ENCODE measurements at regions of chr19 and their contacts with region 1.

Region 1: DNA sequence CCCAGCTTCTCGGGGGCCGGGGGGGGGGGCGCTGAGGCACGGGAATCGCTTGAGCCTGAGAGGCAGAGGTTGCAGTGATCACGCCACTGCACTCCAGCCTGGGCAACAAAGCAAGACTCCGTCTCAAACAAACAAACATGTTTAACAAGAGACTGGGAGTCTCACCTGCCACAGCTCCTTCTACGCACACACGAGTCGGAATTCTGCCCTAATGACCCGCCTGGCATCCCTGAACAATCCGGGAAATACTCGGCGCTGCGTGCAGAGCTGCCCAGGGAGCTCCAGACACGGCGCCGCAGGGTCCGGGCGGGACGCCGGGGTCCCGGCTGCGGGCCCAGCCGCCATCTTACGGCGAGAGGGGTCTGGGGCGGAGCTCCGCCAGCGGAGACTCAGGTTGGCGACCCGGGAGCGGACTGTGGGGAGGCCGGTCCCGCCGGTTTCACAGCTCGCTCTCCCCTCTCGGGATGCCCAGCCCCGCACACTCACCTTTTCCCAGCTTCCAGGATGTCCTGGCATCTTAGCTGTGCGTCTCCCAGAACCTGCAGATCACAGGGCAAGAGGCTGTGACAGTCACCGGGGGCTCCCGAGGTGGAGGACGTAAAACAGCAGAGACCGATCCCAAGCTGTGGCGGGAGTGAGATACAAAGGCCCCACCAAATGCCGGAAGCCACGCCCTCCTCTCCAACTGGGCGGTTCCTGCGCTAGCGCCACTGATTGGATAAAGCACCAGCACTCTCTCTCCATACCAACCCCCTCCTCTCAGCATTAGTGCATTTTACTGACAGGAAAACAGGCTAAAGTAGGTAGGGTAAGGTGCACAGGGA is 23.6 kb upstream of the ZNF724 start:
- DNase-seq: peak; percentile 86 to 96 (median 94)
- H3K4me3 ChIP-seq: peak overlapping the region; percentile 67 to 100 (median 96)
- H3K27ac ChIP-seq: peak overlapping the region; percentile 26 to 96 (median 89)
- H3K27me3 ChIP-seq: no peaks in the 10 kb centered on the region
- CTCF ChIP-seq: peak in 20 of 56 donors; percentile 2 to 44 (median 14)

Region 2: GRCh38 chr19:23160766-23161165 is 113.0 kb before region 1 on chr19:
- intact Hi-C with region 1: no loop called
- DNase-seq: no peak
- H3K4me3 ChIP-seq: no peak overlapping the region
- H3K27ac ChIP-seq: no peak overlapping the region
- H3K27me3 ChIP-seq: no peaks in the 10 kb centered on the region
- CTCF ChIP-seq: no peak

Region 3: DNA sequence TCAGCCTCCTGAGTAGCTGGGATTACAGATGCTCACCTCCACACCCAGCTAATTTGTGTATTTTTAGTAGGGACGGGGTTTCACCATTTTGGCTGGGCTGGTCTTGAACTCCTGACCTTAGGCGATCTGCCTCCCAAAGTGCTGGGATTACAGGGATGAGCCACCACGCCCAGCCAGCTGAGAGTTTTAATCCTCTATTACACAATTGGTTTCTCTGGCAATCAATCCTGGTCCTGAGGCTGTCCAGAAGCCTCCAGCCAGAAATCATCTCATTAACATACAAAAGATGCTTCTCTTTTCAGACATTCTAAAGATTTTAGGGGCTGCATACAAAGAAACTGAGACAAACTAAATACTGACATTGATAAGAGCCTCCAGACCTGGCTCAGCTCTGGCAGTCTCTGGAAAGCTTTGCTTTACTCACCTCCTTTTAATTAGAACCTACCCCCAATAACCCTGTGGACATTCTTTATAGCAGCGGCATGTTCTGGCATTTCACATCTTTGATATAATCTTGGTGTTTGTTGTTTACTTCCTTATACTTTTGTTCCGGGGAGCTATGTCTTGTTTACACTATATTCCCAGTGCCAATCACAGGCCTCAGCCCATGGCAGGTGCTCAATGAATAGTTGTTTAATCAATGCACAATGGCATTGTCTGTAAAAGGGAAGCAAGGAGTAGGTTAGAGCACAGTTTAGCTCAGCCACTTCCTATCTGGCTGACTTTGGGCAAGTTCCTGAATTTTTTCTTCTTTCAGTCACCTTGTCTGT is 19.5 kb before region 1 on chr19:
- intact Hi-C with region 1: no loop called
- DNase-seq: no peak
- H3K4me3 ChIP-seq: no peak overlapping the region
- H3K27ac ChIP-seq: peak overlapping the region in 17 of 59 donors; percentile 0 to 63 (median 33)
- H3K27me3 ChIP-seq: no peaks in the 10 kb centered on the region
- CTCF ChIP-seq: no peak

Region 4: GRCh38 chr19:23312530-23312929 is 38.7 kb after region 1 on chr19:
- intact Hi-C with region 1: no loop called
- DNase-seq: no peak
- H3K4me3 ChIP-seq: no peak overlapping the region
- H3K27ac ChIP-seq: no peak overlapping the region
- H3K27me3 ChIP-seq: no peaks in the 10 kb centered on the region
- CTCF ChIP-seq: no peak

Region 5: GRCh38 chr19:23395041-23395721 is 121.4 kb after region 1 on chr19 and contains the start of gene ZNF91:
- intact Hi-C with region 1: loop called in 1 of 2 experiments (anchors 2 kb)
- DNase-seq: peak; percentile 90 to 99 (median 98)
- H3K4me3 ChIP-seq: peak within 1 kb of the TSS; percentile 59 to 98 (median 88)
- H3K27ac ChIP-seq: peak within 1 kb of the TSS; percentile 58 to 98 (median 91)
- H3K27me3 ChIP-seq: no peaks in the 10 kb centered on the region
- CTCF ChIP-seq: peak in 13 of 56 donors; percentile 7 to 41 (median 17)
- total RNA-seq, gene ZNF91: 86.8 to 280 (median 171) TPM

Measured in dorsolateral prefrontal cortex (tissue), 120 donors.